T-cell (primary cell): ENCODE measurements at regions of chr10 and their contacts with region 1.

Region 1: GRCh38 chr10:31031558-31032257 is at the start of gene ZNF438:
- DNase-seq: peak; percentile 83 to 97 (median 92)
- ATAC-seq: peak; percentile 80 to 88 (median 83)
- H3K4me3 ChIP-seq: peak within 1 kb of the TSS; percentile 73 to 82
- H3K4me3 Mint-ChIP-seq: peak within 1 kb of the TSS; percentile 86 to 88 (median 87)
- H3K27ac ChIP-seq: peak within 1 kb of the TSS; percentile 100
- H3K27ac Mint-ChIP-seq: peak within 1 kb of the TSS; percentile 97
- H3K4me1 ChIP-seq: peaks cover 4 to 19% of the 10 kb centered on the region in 2 experiments
- H3K4me1 Mint-ChIP-seq: peaks cover 13 to 19% (median 14%) of the 10 kb centered on the region in 3 donors
- H3K27me3 ChIP-seq: no peaks in the 10 kb centered on the region
- H3K27me3 Mint-ChIP-seq: no peaks in the 10 kb centered on the region
- total RNA-seq, gene ZNF438: 2.7 to 3.6 (median 3.4) TPM

Region 2: DNA sequence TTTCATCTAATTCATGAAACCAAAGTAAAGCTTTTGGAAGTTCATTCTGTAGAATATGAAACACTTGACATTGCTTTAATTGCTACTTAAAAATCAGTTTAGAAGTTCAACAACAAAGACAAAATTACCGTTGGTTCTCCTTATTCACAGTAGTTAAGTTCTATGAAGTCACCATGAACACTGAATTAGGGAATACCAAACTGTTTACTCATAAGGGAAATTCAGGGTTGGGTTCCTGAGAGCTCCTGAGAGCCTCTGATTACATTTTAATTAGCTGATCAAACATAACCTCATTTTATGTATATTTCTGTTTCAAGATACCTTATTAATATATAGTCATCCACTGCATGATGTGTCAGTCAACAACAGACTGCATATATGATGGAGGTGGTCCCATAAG is 46.2 kb before region 1 on chr10:
- CTCF ChIA-PET with region 1: no interaction called
- POLR2A ChIA-PET with region 1: interaction called in 1 of 2 experiments, 18 read pairs
- DNase-seq: no peak
- ATAC-seq: no peak
- H3K4me3 ChIP-seq: no peak overlapping the region
- H3K4me3 Mint-ChIP-seq: no peak overlapping the region
- H3K27ac ChIP-seq: no peak overlapping the region
- H3K27ac Mint-ChIP-seq: no peak overlapping the region
- H3K4me1 ChIP-seq: no peaks in the 10 kb centered on the region
- H3K4me1 Mint-ChIP-seq: peaks cover 0 to 7% (median 4%) of the 10 kb centered on the region in 3 donors
- H3K27me3 ChIP-seq: no peaks in the 10 kb centered on the region
- H3K27me3 Mint-ChIP-seq: no peaks in the 10 kb centered on the region

Region 3: GRCh38 chr10:30999070-30999712 is 32.5 kb before region 1 on chr10:
- CTCF ChIA-PET with region 1: interaction called in 1 of 2 experiments, 14 read pairs
- POLR2A ChIA-PET with region 1: interaction called, 4 read pairs
- DNase-seq: peak in 3 of 35 experiments; percentile 3 to 24 (median 5)
- ATAC-seq: peak in 1 of 4 experiments; percentile 23
- H3K4me3 ChIP-seq: peak overlapping the region in 1 of 2 donors; percentile 18
- H3K4me3 Mint-ChIP-seq: peak overlapping the region; percentile 58 to 74 (median 69)
- H3K27ac ChIP-seq: peak overlapping the region; percentile 53
- H3K27ac Mint-ChIP-seq: peak overlapping the region; percentile 84 to 88
- H3K4me1 ChIP-seq: peaks cover 0 to 7% of the 10 kb centered on the region in 2 experiments
- H3K4me1 Mint-ChIP-seq: peaks cover 29 to 44% (median 37%) of the 10 kb centered on the region in 3 donors
- H3K27me3 ChIP-seq: no peaks in the 10 kb centered on the region
- H3K27me3 Mint-ChIP-seq: no peaks in the 10 kb centered on the region

Region 4: GRCh38 chr10:31010062-31010461 is 21.6 kb before region 1 on chr10:
- CTCF ChIA-PET with region 1: no interaction called
- POLR2A ChIA-PET with region 1: no interaction called
- DNase-seq: no peak
- ATAC-seq: no peak
- H3K4me3 ChIP-seq: no peak overlapping the region
- H3K4me3 Mint-ChIP-seq: no peak overlapping the region
- H3K27ac ChIP-seq: no peak overlapping the region
- H3K27ac Mint-ChIP-seq: no peak overlapping the region
- H3K4me1 ChIP-seq: no peaks in the 10 kb centered on the region
- H3K4me1 Mint-ChIP-seq: peaks cover 6 to 18% (median 12%) of the 10 kb centered on the region in 3 donors
- H3K27me3 ChIP-seq: no peaks in the 10 kb centered on the region
- H3K27me3 Mint-ChIP-seq: no peaks in the 10 kb centered on the region